IMR-90 (cell line): ENCODE measurements at regions of chr2 and their contacts with region 1.

Region 1: DNA sequence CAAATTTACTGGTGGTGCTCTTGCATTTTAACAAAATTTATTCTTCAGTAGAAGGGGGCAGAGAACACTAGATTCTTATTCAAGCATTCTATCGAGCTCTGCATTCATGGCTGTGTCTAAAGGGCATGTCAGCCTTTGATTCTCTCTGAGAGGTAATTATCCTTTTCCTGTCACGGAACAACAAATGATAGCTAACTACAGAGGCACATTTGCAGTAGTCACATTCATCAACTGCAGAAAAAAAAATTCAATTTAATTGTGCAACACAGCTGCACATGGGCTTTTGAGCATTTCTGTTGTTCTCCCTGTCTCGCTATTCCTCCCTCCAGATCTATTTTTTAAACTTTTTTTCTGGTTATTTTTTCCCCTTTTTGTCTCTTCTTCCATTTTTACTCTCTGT is 13.0 kb upstream of the DLX1 start:
- DNase-seq: no peak
- ATAC-seq: no peak
- H3K4me3 ChIP-seq: no peak overlapping the region
- H3K27ac ChIP-seq: no peak overlapping the region
- H3K4me1 ChIP-seq: no peaks in the 10 kb centered on the region
- H3K27me3 ChIP-seq: no peaks in the 10 kb centered on the region
- CTCF ChIP-seq: no peak
- POLR2A ChIP-seq: no peak
- RAD21 ChIP-seq: no peak

Region 2: DNA sequence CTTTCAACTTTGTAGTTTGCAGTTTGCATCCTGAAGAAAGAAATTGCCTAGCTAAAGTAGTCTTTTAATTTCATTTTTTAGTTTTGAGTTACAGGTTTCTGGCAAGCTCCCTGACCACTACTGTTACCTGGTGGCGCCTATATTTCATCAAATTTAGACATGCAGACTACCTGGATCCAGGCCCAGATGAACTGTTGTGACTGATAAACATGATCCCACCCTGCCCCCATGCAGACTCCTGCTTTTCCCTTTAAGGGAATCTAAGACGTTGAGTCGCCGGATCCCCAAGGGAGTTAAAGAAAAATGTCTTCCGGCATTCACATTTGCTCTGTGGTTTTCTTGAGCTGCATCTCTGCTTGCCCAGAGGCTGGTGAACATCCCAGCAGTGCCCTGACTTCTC is 50.3 kb before region 1 on chr2:
- CTCF ChIA-PET with region 1: no interaction called
- POLR2A ChIA-PET with region 1: no interaction called
- dilution Hi-C with region 1: no loop called
- in situ Hi-C with region 1: no loop called
- intact Hi-C with region 1: loop called (anchors 5 kb)
- DNase-seq: peak; percentile 37
- ATAC-seq: peak; percentile 86
- H3K4me3 ChIP-seq: no peak overlapping the region
- H3K27ac ChIP-seq: 0 out of 2 replicates have a peak overlapping the region, but pooled peaks have one; percentile 33
- H3K4me1 ChIP-seq: peaks cover 9% of the 10 kb centered on the region
- H3K27me3 ChIP-seq: no peaks in the 10 kb centered on the region
- CTCF ChIP-seq: no peak
- POLR2A ChIP-seq: no peak
- RAD21 ChIP-seq: no peak